IMR-90 (cell line): ENCODE measurements at regions of chr2 and their contacts with region 1.

Region 1: DNA sequence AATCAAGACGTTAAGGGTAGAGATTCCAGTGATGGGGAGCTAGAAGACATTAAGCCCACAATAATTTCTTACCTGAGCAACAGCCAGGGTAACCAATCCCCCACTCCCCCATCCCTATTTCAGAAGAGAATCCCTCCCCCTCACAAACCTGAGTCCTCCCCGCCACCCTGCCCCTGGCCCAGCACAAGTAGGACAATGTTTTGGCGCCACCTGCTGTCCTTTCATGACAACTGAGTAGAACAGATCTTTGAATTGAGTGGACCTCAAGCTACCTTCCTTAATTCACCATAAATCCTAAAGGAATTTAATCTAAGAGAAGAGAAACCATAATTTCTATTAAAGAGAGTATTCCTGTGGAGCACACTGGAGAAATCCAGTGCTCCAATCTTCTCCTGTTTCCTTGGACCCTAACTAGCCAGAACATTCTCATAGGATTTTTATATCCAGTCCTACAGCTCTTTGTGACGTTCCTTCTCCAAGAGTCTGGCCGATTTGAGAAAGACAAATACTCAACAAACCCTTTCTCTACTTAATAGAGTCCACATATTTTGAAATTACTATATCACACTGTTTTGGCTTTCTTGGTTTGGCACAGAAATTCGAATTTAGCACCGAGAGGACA is 41.1 kb downstream of the NHEJ1 start:
- DNase-seq: peak; percentile 53
- ATAC-seq: peak; percentile 83
- H3K4me3 ChIP-seq: no peak overlapping the region
- H3K27ac ChIP-seq: no peak overlapping the region
- H3K4me1 ChIP-seq: peaks cover 6% of the 10 kb centered on the region
- H3K27me3 ChIP-seq: no peaks in the 10 kb centered on the region
- CTCF ChIP-seq: peak; percentile 69
- POLR2A ChIP-seq: no peak
- RAD21 ChIP-seq: peak; percentile 79

Region 2: GRCh38 chr2:219029829-219030165 is 89.7 kb before region 1 on chr2:
- CTCF ChIA-PET with region 1: interaction called, 4 read pairs
- POLR2A ChIA-PET with region 1: no interaction called
- dilution Hi-C with region 1: no loop called
- in situ Hi-C with region 1: no loop called
- intact Hi-C with region 1: loop called (anchors 1 kb)
- DNase-seq: peak; percentile 63
- ATAC-seq: peak; percentile 100
- H3K4me3 ChIP-seq: no peak overlapping the region
- H3K27ac ChIP-seq: no peak overlapping the region
- H3K4me1 ChIP-seq: no peaks in the 10 kb centered on the region
- H3K27me3 ChIP-seq: peaks cover 48% of the 10 kb centered on the region
- CTCF ChIP-seq: peak; percentile 91
- POLR2A ChIP-seq: no peak
- RAD21 ChIP-seq: peak; percentile 87

Region 3: GRCh38 chr2:219057709-219058540 is 61.6 kb before region 1 on chr2:
- CTCF ChIA-PET with region 1: interaction called, 15 read pairs
- POLR2A ChIA-PET with region 1: no interaction called
- dilution Hi-C with region 1: no loop called
- in situ Hi-C with region 1: no loop called
- intact Hi-C with region 1: loop called (anchors 1 kb)
- DNase-seq: peak; percentile 56
- ATAC-seq: peak; percentile 97
- H3K4me3 ChIP-seq: no peak overlapping the region
- H3K27ac ChIP-seq: no peak overlapping the region
- H3K4me1 ChIP-seq: peaks cover 6% of the 10 kb centered on the region; the same call in 1 of the 2 replicates
- H3K27me3 ChIP-seq: peaks cover 91% of the 10 kb centered on the region
- CTCF ChIP-seq: peak; percentile 93
- POLR2A ChIP-seq: no peak
- RAD21 ChIP-seq: peak; percentile 96

Region 4: GRCh38 chr2:219073413-219074129 is 46.0 kb before region 1 on chr2:
- CTCF ChIA-PET with region 1: interaction called, 8 read pairs
- POLR2A ChIA-PET with region 1: no interaction called
- dilution Hi-C with region 1: no loop called
- in situ Hi-C with region 1: no loop called
- intact Hi-C with region 1: loop called (anchors 1 kb)
- DNase-seq: peak; percentile 72
- ATAC-seq: peak; percentile 81
- H3K4me3 ChIP-seq: no peak overlapping the region
- H3K27ac ChIP-seq: no peak overlapping the region
- H3K4me1 ChIP-seq: no peaks in the 10 kb centered on the region
- H3K27me3 ChIP-seq: no peaks in the 10 kb centered on the region
- CTCF ChIP-seq: peak; percentile 72
- POLR2A ChIP-seq: no peak
- RAD21 ChIP-seq: peak; percentile 67

Region 5: GRCh38 chr2:220664272-220665107 is 1545.0 kb after region 1 on chr2:
- CTCF ChIA-PET with region 1: no interaction called
- POLR2A ChIA-PET with region 1: no interaction called
- dilution Hi-C with region 1: no loop called
- in situ Hi-C with region 1: no loop called
- intact Hi-C with region 1: no loop called
- DNase-seq: peak; percentile 66
- ATAC-seq: peak; percentile 77
- H3K4me3 ChIP-seq: no peak overlapping the region
- H3K27ac ChIP-seq: peak overlapping the region; percentile 24; the same call in 1 of the 2 replicates
- H3K4me1 ChIP-seq: peaks cover 3% of the 10 kb centered on the region
- H3K27me3 ChIP-seq: no peaks in the 10 kb centered on the region
- CTCF ChIP-seq: no peak
- POLR2A ChIP-seq: no peak
- RAD21 ChIP-seq: no peak